Activated CD8-positive, alpha-beta T cell treated with anti-CD3 and anti-CD28 coated beads for 36 hours (primary cell): ENCODE measurements at regions of chr15 and their contacts with region 1.

Region 1: GRCh38 chr15:31799715-31800321 is 230.5 kb upstream of the CHRNA7 start:
- DNase-seq: no peak
- ATAC-seq: no peak
- H3K4me3 Mint-ChIP-seq: no peak overlapping the region
- H3K27ac Mint-ChIP-seq: no peak overlapping the region
- H3K4me1 Mint-ChIP-seq: no peaks in the 10 kb centered on the region
- H3K27me3 Mint-ChIP-seq: peaks cover 2% of the 10 kb centered on the region
- CTCF ChIP-seq: no peak

Region 2: GRCh38 chr15:31857194-31857593 is 57.4 kb after region 1 on chr15:
- CTCF ChIA-PET with region 1: no interaction called
- POLR2A ChIA-PET with region 1: no interaction called
- intact Hi-C with region 1: loop called (anchors 10 kb)
- DNase-seq: no peak
- ATAC-seq: no peak
- H3K4me3 Mint-ChIP-seq: no peak overlapping the region
- H3K27ac Mint-ChIP-seq: no peak overlapping the region
- H3K4me1 Mint-ChIP-seq: no peaks in the 10 kb centered on the region
- H3K27me3 Mint-ChIP-seq: peaks cover 2% of the 10 kb centered on the region
- CTCF ChIP-seq: no peak

Region 3: DNA sequence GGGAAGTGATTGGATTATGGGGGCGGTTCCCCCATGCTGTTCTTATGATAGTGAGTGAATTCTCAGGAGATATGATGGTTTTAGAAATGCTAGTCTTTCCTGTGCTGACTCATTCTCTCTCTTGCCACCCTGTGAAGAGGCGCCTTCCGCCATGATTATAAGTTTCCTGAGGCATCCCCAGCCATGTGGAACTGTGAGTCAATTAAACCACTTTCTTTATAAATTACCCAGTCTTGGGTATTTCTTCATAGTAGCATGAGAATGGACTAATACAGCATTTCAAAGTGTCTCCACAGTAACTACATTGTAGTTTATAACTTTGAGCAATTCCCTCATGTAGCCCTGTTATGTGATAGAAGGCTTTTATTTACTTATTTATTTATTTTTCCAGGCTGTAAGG is 101.7 kb after region 1 on chr15:
- CTCF ChIA-PET with region 1: no interaction called
- POLR2A ChIA-PET with region 1: no interaction called
- intact Hi-C with region 1: no loop called
- DNase-seq: no peak
- ATAC-seq: no peak
- H3K4me3 Mint-ChIP-seq: no peak overlapping the region
- H3K27ac Mint-ChIP-seq: no peak overlapping the region
- H3K4me1 Mint-ChIP-seq: no peaks in the 10 kb centered on the region
- H3K27me3 Mint-ChIP-seq: peaks cover 1% of the 10 kb centered on the region
- CTCF ChIP-seq: no peak